ENCODE measurements at regions of chr5 and their contacts with region 1.

Region 1: DNA sequence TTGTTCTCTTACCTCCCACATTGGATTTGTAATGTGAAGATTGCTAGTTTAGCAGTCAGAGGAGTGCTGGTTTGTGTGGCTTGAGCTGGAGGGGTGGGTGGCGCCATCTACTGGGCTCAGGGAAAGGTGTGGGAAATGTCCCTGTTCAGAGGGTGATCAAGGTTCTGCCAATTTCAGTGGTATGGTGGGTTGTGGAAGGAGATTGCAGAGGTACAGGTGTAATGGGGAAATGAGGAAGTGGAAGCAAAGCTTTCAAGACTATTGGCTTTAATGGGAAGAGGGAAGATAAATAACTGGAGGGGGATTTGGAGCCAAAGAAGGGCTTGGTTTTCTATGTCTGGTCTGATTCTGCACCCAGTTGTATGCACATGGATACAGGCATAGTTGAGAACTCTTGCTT is 76.4 kb downstream of the OSMR start:
- DNase-seq: no peak
- H3K4me3 ChIP-seq: no peak overlapping the region
- H3K27ac ChIP-seq: no peak overlapping the region
- H3K4me1 ChIP-seq: peaks cover 0 to 32% (median 22%) of the 10 kb centered on the region in 4 donors
- H3K27me3 ChIP-seq: no peaks in the 10 kb centered on the region
- CTCF ChIP-seq: peak; percentile 38 to 70 (median 54)
- EP300 ChIP-seq: no peak
- POLR2A ChIP-seq: no peak

Region 2: GRCh38 chr5:38441453-38442246 is 480.5 kb before region 1 on chr5:
- intact Hi-C with region 1: loop called (anchors 10 kb)
- DNase-seq: peak; percentile 94
- H3K4me3 ChIP-seq: no peak overlapping the region
- H3K27ac ChIP-seq: no peak overlapping the region
- H3K4me1 ChIP-seq: no peaks in the 10 kb centered on the region
- H3K27me3 ChIP-seq: no peaks in the 10 kb centered on the region
- CTCF ChIP-seq: peak; percentile 90 to 93 (median 91)
- EP300 ChIP-seq: no peak
- POLR2A ChIP-seq: no peak

Region 3: GRCh38 chr5:38831909-38832308 is 90.3 kb before region 1 on chr5:
- intact Hi-C with region 1: loop called (anchors 5 kb)
- DNase-seq: no peak
- H3K4me3 ChIP-seq: no peak overlapping the region
- H3K27ac ChIP-seq: no peak overlapping the region
- H3K4me1 ChIP-seq: peaks cover 0 to 8% (median 0%) of the 10 kb centered on the region in 4 donors
- H3K27me3 ChIP-seq: no peaks in the 10 kb centered on the region
- CTCF ChIP-seq: peak in 3 of 4 experiments; percentile 22 to 54 (median 47)
- EP300 ChIP-seq: no peak
- POLR2A ChIP-seq: no peak

Region 4: GRCh38 chr5:38845526-38846378 is 76.4 kb before region 1 on chr5 and contains the start of gene OSMR:
- intact Hi-C with region 1: loop called (anchors 5 kb)
- DNase-seq: peak; percentile 98
- H3K4me3 ChIP-seq: peak within 1 kb of the TSS; percentile 62 to 88 (median 88)
- H3K27ac ChIP-seq: peak within 1 kb of the TSS; percentile 88 to 97 (median 94)
- H3K4me1 ChIP-seq: peaks cover 0 to 48% (median 34%) of the 10 kb centered on the region in 4 donors
- H3K27me3 ChIP-seq: no peaks in the 10 kb centered on the region
- CTCF ChIP-seq: no peak
- EP300 ChIP-seq: peak; percentile 44 to 84 (median 79)
- POLR2A ChIP-seq: peak in 1 of 2 donors; percentile 37
- total RNA-seq, gene OSMR: 18.5 to 65.3 (median 39.0) TPM

Measured in sigmoid colon (tissue), 7 donors.